Heart right ventricle (tissue), 16 donors: ENCODE measurements at regions of chr14 and their contacts with region 1.

Region 1: GRCh38 chr14:61296719-61297502 is 15.8 kb upstream of the TMEM30B start:
- DNase-seq: no peak
- ATAC-seq: peak in 4 of 8 donors; percentile 38 to 54 (median 51)
- H3K4me3 ChIP-seq: no peak overlapping the region
- H3K27ac ChIP-seq: no peak overlapping the region
- H3K4me1 ChIP-seq: peaks cover 0 to 9% (median 0%) of the 10 kb centered on the region in 9 donors
- H3K27me3 ChIP-seq: no peaks in the 10 kb centered on the region
- CTCF ChIP-seq: peak; percentile 45 to 82 (median 75)

Region 2: DNA sequence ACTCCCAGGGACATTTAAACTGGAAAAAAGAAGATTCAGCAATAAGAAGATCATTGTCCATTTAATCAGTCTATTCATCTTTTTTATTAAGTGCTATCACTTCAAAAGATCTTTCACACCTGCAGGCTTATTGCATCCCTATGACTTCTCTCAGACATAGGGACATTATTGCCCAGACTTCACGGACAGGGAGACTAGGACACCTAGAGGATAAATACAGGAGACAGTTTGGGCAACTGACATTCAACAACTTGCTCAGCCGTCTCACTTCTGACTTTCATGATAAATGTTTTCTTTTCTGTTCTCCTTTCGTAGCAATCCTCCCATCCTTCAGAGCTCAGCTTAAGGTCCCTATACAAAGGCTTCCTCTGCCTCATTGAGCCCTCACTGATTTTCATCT is 100.1 kb before region 1 on chr14:
- intact Hi-C with region 1: no loop called
- DNase-seq: no peak
- ATAC-seq: no peak
- H3K4me3 ChIP-seq: no peak overlapping the region
- H3K27ac ChIP-seq: no peak overlapping the region
- H3K4me1 ChIP-seq: no peaks in the 10 kb centered on the region
- H3K27me3 ChIP-seq: peaks cover 0 to 26% (median 0%) of the 10 kb centered on the region in 7 donors
- CTCF ChIP-seq: no peak

Region 3: GRCh38 chr14:61438860-61439684 is 142.2 kb after region 1 on chr14:
- intact Hi-C with region 1: loop called in 1 of 10 experiments (anchors 5 kb)
- DNase-seq: peak; percentile 28 to 45
- ATAC-seq: peak; percentile 45 to 83 (median 81)
- H3K4me3 ChIP-seq: peak overlapping the region in 3 of 10 donors; percentile 12 to 33 (median 15)
- H3K27ac ChIP-seq: peak overlapping the region in 8 of 10 donors; percentile 11 to 67 (median 40)
- H3K4me1 ChIP-seq: peaks cover 0 to 68% (median 50%) of the 10 kb centered on the region in 9 donors
- H3K27me3 ChIP-seq: no peaks in the 10 kb centered on the region
- CTCF ChIP-seq: no peak

Region 4: DNA sequence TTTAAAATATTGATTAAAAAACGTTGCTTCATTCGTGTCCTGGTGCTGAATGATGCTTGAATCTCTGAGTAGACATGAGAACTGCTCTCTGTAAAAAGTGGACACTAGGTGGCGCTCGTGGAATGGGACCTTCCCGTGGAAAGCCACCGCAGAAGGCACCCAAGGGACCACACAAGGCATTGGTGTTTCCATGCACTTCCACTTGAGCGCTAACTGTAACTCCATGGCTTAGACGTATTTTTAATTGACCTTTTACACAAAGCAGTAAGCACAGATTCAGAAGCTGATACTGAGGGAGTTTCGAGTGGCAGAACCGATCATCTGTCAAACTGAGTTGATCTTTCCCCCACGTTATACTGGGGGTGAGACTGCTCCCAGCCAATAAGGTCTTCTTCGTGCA is 159.8 kb after region 1 on chr14:
- intact Hi-C with region 1: loop called in 8 of 10 experiments (anchors 1 to 5 kb)
- DNase-seq: peak; percentile 58 to 91
- ATAC-seq: peak; percentile 61 to 82 (median 76)
- H3K4me3 ChIP-seq: no peak overlapping the region
- H3K27ac ChIP-seq: no peak overlapping the region
- H3K4me1 ChIP-seq: peaks cover 0 to 53% (median 27%) of the 10 kb centered on the region in 9 donors
- H3K27me3 ChIP-seq: no peaks in the 10 kb centered on the region
- CTCF ChIP-seq: peak; percentile 70 to 93 (median 90)

Region 5: GRCh38 chr14:61461808-61462275 is 164.9 kb after region 1 on chr14:
- intact Hi-C with region 1: loop called in 6 of 10 experiments (anchors 5 kb)
- DNase-seq: peak in 1 of 2 donors; percentile 65
- ATAC-seq: peak; percentile 12 to 67 (median 54)
- H3K4me3 ChIP-seq: no peak overlapping the region
- H3K27ac ChIP-seq: peak overlapping the region in 7 of 10 donors; percentile 38 to 74 (median 53)
- H3K4me1 ChIP-seq: peaks cover 0 to 43% (median 35%) of the 10 kb centered on the region in 9 donors
- H3K27me3 ChIP-seq: no peaks in the 10 kb centered on the region
- CTCF ChIP-seq: peak; percentile 72 to 85 (median 82)

Region 6: GRCh38 chr14:61730756-61731373 is 434.0 kb after region 1 on chr14:
- intact Hi-C with region 1: loop called in 3 of 10 experiments (anchors 10 kb)
- DNase-seq: no peak
- ATAC-seq: peak in 3 of 8 donors; percentile 21 to 39 (median 29)
- H3K4me3 ChIP-seq: no peak overlapping the region
- H3K27ac ChIP-seq: peak overlapping the region in 4 of 10 donors; percentile 37 to 48 (median 40)
- H3K4me1 ChIP-seq: peaks cover 0 to 31% (median 9%) of the 10 kb centered on the region in 9 donors
- H3K27me3 ChIP-seq: no peaks in the 10 kb centered on the region
- CTCF ChIP-seq: peak in 8 of 9 donors; percentile 17 to 73 (median 60)

Region 7: GRCh38 chr14:61837336-61838229 is 540.7 kb after region 1 on chr14:
- intact Hi-C with region 1: loop called in 7 of 10 experiments (anchors 2 to 10 kb)
- DNase-seq: peak; percentile 60 to 77
- ATAC-seq: peak; percentile 79 to 94 (median 92)
- H3K4me3 ChIP-seq: no peak overlapping the region
- H3K27ac ChIP-seq: no peak overlapping the region
- H3K4me1 ChIP-seq: peaks cover 0 to 20% (median 0%) of the 10 kb centered on the region in 9 donors
- H3K27me3 ChIP-seq: peaks cover 0 to 6% (median 0%) of the 10 kb centered on the region in 7 donors
- CTCF ChIP-seq: peak; percentile 92 to 99 (median 95)

Region 8: DNA sequence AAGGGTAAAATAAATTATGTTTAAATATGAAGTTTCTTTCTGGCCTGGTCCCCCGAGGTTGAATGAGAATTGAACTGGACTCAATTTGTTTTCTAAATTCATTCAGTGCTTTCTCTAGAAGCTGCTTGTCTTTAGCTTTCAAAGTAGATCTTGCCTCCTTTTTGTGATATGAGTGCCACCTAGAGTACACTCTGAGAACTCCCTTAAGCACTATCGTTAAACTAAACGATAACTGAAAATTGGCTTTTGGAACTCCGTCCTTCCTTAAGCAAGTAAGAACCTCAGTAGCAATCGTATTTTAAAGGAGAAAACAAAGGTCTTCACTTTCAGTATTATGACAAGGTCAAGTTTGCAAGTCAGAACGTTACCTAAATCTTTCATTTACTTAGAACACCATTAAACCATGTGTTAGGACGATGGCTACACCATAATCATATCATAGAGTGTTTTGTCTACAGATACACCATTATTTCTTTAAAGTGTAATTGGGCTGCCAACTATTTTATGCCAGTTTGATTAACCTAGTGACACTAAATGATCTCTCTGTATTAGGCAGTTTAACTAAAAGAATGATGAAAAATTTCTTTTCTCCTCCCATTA is 830.1 kb after region 1 on chr14:
- intact Hi-C with region 1: loop called in 3 of 10 experiments (anchors 10 kb)
- DNase-seq: peak in 1 of 2 donors; percentile 5
- ATAC-seq: peak in 1 of 8 donors; percentile 69
- H3K4me3 ChIP-seq: no peak overlapping the region
- H3K27ac ChIP-seq: no peak overlapping the region
- H3K4me1 ChIP-seq: no peaks in the 10 kb centered on the region
- H3K27me3 ChIP-seq: peaks cover 0 to 71% (median 50%) of the 10 kb centered on the region in 7 donors
- CTCF ChIP-seq: peak; percentile 31 to 80 (median 72)